Motor neuron (in vitro differentiated cells): ENCODE measurements at regions of chr2 and their contacts with region 1.

Region 1: GRCh38 chr2:171416009-171416926 is 17.5 kb downstream of the METTL8 start:
- ATAC-seq: peak; percentile 97 to 100 (median 100)
- H3K4me3 ChIP-seq: peak overlapping the region in 2 of 5 donors; percentile 3 to 15
- H3K27ac ChIP-seq: no peak overlapping the region
- H3K4me1 ChIP-seq: no peaks in the 10 kb centered on the region

Region 2: GRCh38 chr2:170966648-170967436 is 449.4 kb before region 1 on chr2:
- in situ Hi-C with region 1: loop called in 6 of 9 experiments (anchors 10 to 25 kb)
- ATAC-seq: peak in 7 of 8 experiments; percentile 26 to 62 (median 40)
- H3K4me3 ChIP-seq: no peak overlapping the region
- H3K27ac ChIP-seq: no peak overlapping the region
- H3K4me1 ChIP-seq: no peaks in the 10 kb centered on the region

Region 3: DNA sequence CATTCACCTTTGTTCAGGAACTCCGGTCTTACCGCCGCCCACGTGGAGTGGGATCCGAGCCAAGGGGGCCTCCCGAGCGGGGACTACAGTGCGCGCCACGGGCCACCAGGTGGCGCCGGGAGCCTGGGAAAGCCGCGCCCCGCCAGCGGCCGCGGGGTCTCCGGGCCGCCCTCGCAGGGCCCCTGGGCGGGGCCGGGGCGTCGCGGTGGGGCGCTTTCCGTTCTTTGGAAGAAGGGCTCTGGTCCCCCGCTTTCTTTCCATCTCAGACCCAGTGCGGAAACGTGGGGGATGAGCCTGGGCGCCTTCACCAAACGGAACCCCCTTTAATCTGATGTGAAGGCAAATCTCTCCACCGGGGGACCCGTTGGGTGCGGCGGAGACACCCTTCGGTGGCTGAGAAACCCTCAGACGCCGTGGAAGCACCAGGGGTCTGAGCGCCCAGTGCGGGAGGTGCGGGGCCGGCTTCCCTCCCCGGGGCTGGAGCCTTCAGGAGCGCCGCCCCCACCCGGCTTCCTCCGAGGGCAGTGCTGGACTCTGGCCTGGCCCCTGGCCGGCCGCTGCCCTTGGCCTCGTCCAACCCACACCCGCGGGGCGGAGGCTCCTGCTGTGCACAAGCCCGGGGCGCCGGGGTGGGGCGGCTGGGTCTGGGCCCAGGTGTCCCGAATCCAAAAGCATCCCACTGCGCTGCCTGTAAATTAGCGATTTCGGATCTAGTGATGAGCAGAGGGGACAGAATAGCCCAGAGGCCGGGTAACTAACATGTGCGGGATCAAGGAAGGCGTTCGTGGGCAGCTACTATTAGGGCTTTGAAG is 442.6 kb before region 1 on chr2:
- in situ Hi-C with region 1: loop called in 8 of 9 experiments (anchors 10 to 25 kb)
- ATAC-seq: peak; percentile 86 to 96 (median 94)
- H3K4me3 ChIP-seq: peak overlapping the region; percentile 23 to 47 (median 37)
- H3K27ac ChIP-seq: peak overlapping the region; percentile 2 to 25
- H3K4me1 ChIP-seq: peaks cover 3 to 4% of the 10 kb centered on the region in 2 donors

Region 4: GRCh38 chr2:170991399-170992182 is 424.7 kb before region 1 on chr2:
- in situ Hi-C with region 1: loop called in 2 of 9 experiments (anchors 25 kb)
- ATAC-seq: no peak
- H3K4me3 ChIP-seq: no peak overlapping the region
- H3K27ac ChIP-seq: no peak overlapping the region
- H3K4me1 ChIP-seq: no peaks in the 10 kb centered on the region